Keratinocyte (primary cell): ENCODE measurements at regions of chr2 and their contacts with region 1.

Region 1: DNA sequence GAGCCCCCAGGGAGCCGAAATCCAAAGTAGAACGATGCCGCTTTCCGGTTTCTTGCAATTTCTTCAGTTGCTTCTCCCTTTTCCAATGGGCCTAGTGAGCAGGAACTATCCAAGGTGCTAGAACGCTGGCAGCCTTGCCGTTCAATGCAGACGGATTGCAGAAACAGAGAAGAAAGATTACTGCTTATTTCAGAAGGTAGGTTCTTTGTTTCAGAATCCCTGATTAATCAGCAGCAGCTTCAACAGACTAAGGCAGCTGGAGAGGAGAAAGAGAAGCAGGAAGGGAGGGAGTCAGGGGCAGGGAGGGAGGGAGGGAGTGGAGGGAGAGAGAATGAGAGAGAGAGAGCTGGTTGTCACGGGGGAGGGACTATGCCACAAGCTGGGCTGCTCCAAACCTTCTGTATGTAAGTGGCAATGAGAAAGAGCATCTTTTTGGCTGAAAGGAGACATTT is 576 bp downstream of the NYAP2 start:
- DNase-seq: no peak
- H3K4me3 ChIP-seq: no peak overlapping the region
- H3K27ac ChIP-seq: no peak overlapping the region
- H3K4me1 ChIP-seq: no peaks in the 10 kb centered on the region
- H3K27me3 ChIP-seq: no peaks in the 10 kb centered on the region
- CTCF ChIP-seq: no peak

Region 2: GRCh38 chr2:225367446-225367845 is 32.6 kb before region 1 on chr2:
- dilution Hi-C with region 1: no loop called
- DNase-seq: no peak
- H3K4me3 ChIP-seq: no peak overlapping the region
- H3K27ac ChIP-seq: no peak overlapping the region
- H3K4me1 ChIP-seq: no peaks in the 10 kb centered on the region
- H3K27me3 ChIP-seq: no peaks in the 10 kb centered on the region
- CTCF ChIP-seq: no peak

Region 3: GRCh38 chr2:225464346-225465025 is 64.4 kb after region 1 on chr2:
- dilution Hi-C with region 1: no loop called
- DNase-seq: no peak
- H3K4me3 ChIP-seq: no peak overlapping the region
- H3K27ac ChIP-seq: no peak overlapping the region
- H3K4me1 ChIP-seq: no peaks in the 10 kb centered on the region
- H3K27me3 ChIP-seq: no peaks in the 10 kb centered on the region
- CTCF ChIP-seq: no peak

Region 4: GRCh38 chr2:225479386-225479785 is 79.3 kb after region 1 on chr2:
- dilution Hi-C with region 1: loop called (anchors 5 kb)
- DNase-seq: no peak
- H3K4me3 ChIP-seq: no peak overlapping the region
- H3K27ac ChIP-seq: no peak overlapping the region
- H3K4me1 ChIP-seq: no peaks in the 10 kb centered on the region
- H3K27me3 ChIP-seq: no peaks in the 10 kb centered on the region
- CTCF ChIP-seq: no peak